PC-9 (cell line): ENCODE measurements at regions of chr3 and their contacts with region 1.

Region 1: DNA sequence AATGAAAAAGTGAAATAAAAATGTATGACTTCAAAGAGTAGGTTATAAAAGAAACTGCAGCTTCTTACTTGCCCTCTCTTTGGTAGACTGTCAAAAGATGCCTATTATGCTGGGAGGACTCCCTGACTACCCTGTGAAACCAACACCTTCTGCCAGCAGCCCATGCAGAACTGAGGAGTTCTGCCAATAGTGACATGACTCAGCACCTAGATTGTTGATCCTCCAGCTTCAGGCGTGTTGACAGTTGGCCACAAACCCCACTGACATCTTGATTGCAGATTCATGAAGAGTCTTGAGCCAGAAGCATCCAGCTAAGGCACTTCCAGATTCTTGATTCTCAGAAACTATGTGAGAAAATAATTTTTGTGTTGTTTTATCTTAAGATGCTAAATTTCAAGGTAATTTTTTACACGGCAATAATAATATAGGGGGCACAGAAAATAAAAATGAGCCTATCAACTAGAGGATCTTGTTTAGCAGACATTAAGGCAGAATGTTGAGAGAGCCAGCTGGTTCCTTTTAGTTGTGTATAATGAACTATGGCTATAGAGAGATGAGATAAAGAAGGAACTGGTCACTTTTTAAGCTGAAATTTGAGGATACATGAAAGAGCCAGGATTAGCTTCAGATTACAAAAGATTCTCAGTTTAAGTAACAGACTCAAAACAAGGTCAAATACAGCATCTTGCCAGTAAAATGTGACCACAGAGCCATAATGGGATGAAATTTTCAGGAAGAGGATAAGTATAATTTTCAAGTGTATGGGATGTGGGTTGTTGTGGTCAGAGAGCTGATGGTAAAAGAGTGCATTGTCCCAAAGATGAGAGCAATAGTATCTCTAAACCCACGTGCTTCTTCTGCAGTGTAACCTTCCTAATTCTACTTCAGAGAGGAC is 588.7 kb upstream of the CBLB start:
- DNase-seq: peak; percentile 44 to 67
- H3K4me3 ChIP-seq: no peak overlapping the region
- H3K27ac ChIP-seq: no peak overlapping the region
- H3K4me1 ChIP-seq: peaks cover 7% of the 10 kb centered on the region; the same call in 1 of the 2 replicates
- H3K27me3 ChIP-seq: no peaks in the 10 kb centered on the region
- CTCF ChIP-seq: no peak

Region 2: GRCh38 chr3:106183762-106184391 is 273.7 kb before region 1 on chr3:
- CTCF ChIA-PET with region 1: no interaction called
- POLR2A ChIA-PET with region 1: no interaction called
- intact Hi-C with region 1: no loop called
- DNase-seq: peak; percentile 32 to 97
- H3K4me3 ChIP-seq: no peak overlapping the region
- H3K27ac ChIP-seq: peak overlapping the region; percentile 31
- H3K4me1 ChIP-seq: peaks cover 18% of the 10 kb centered on the region
- H3K27me3 ChIP-seq: no peaks in the 10 kb centered on the region
- CTCF ChIP-seq: no peak

Region 3: GRCh38 chr3:106425026-106425425 is 32.5 kb before region 1 on chr3:
- CTCF ChIA-PET with region 1: interaction called, 4 read pairs
- POLR2A ChIA-PET with region 1: interaction called, 26 read pairs
- intact Hi-C with region 1: no loop called
- DNase-seq: no peak
- H3K4me3 ChIP-seq: no peak overlapping the region
- H3K27ac ChIP-seq: no peak overlapping the region
- H3K4me1 ChIP-seq: no peaks in the 10 kb centered on the region; the same call in 1 of the 2 replicates
- H3K27me3 ChIP-seq: no peaks in the 10 kb centered on the region
- CTCF ChIP-seq: no peak